Esophagus muscularis mucosa (tissue), 4 donors: ENCODE measurements at regions of chr5 and their contacts with region 1.

Region 1: GRCh38 chr5:108748401-108749127 is 867 bp downstream of the FER start:
- DNase-seq: peak; percentile 100
- H3K4me3 ChIP-seq: peak overlapping the region; percentile 87 to 97 (median 95)
- H3K27ac ChIP-seq: peak overlapping the region; percentile 98 to 99 (median 98)
- H3K4me1 ChIP-seq: peaks cover 8 to 47% (median 27%) of the 10 kb centered on the region in 4 donors
- H3K27me3 ChIP-seq: no peaks in the 10 kb centered on the region
- CTCF ChIP-seq: peak in 2 of 3 experiments; percentile 11 to 20
- EP300 ChIP-seq: no peak
- POLR2A ChIP-seq: peak; percentile 98

Region 2: DNA sequence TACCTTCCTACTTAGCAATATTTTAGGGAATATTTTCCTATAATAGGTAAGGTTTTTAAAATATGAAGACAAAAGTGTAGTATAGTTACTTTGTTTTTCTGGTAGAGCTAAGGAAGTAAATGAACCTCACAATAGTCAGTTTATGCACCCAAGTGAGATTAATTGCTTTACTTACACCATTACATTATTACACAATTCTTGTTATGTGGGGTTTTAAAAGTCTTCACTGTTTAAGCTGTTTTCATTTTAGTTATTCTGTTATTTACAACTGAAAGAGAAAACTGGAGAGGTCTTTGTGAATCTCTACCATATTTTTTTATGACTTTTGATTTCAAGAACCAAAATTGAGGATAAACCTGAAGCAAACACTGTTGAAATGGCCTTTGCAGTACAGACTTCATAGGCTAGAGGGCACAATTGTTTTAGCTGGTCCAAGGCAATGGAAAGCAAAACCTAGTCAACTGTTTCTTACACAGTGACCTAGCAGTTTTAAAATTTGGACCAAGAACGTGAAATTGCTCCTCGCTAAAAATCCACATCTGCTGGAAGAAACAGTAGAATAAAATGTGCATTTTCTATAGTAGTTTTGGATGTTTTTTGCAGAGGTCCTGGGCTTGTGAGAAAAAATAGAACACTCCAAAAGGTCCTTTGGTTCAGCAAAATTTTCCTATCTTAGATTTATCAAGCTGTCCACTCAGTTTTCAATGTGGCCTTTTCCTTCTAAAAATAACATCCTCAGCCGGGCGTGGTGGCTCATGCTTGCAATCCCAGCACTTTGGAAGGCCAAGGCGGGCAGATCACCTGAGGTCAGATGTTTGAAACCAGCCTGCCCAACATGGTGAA is 67.3 kb before region 1 on chr5:
- intact Hi-C with region 1: loop called (anchors 5 kb)
- DNase-seq: no peak
- H3K4me3 ChIP-seq: peak overlapping the region in 2 of 4 donors; percentile 36 to 42
- H3K27ac ChIP-seq: peak overlapping the region; percentile 37 to 74 (median 65)
- H3K4me1 ChIP-seq: peaks cover 0 to 7% (median 4%) of the 10 kb centered on the region in 4 donors
- H3K27me3 ChIP-seq: no peaks in the 10 kb centered on the region
- CTCF ChIP-seq: peak; percentile 78 to 92 (median 87)
- EP300 ChIP-seq: no peak
- POLR2A ChIP-seq: no peak

Region 3: DNA sequence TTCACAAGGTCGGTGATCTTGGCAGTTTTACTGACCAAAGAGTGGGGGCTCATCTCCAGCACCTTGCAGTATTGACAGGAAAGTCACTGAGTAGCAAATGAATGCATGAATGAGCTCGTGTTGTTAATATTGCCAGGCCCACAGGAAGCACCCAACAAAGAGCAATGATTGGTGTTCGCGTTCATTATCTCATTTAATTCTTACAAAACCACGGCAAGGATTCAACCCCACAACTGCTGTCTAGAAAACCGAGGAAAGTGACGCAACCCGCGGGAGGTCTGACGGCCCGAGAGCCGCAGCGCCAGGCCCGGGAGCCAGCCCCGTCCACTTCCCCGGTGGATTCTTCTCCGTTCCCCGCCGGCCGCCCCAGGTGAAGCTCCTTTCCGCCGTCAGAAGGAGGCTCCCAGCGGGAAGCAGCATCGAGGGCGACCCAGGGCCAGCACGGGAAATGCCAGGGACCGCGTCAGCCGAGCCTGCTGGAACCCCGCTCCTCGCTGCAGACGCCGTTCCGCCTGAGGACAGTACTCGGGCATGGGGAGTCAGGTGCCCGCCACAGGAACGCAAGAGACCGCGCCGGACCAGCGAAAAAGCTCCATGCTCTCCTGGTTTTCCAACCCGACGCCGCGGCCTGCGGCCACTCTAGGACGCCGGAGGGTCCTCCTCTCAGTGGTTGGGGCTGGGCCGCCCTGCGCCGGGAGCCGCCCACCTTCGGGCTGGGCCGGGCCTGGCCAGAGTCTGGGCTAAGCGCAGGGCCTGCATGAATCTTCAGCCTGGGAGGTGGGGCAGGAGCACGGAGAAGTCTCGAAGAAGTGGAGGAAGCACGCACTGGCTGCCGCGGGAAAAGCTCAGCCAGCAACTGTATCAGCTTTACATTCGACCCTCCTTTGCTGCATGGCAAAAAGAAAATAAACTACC is 20.7 kb before region 1 on chr5:
- intact Hi-C with region 1: loop called (anchors 2 kb)
- DNase-seq: peak; percentile 94
- H3K4me3 ChIP-seq: peak overlapping the region; percentile 69 to 89 (median 82)
- H3K27ac ChIP-seq: peak overlapping the region; percentile 87 to 96 (median 90)
- H3K4me1 ChIP-seq: peaks cover 12 to 22% (median 19%) of the 10 kb centered on the region in 4 donors
- H3K27me3 ChIP-seq: no peaks in the 10 kb centered on the region
- CTCF ChIP-seq: peak in 2 of 3 experiments; percentile 2 to 10
- EP300 ChIP-seq: no peak
- POLR2A ChIP-seq: no peak

Region 4: DNA sequence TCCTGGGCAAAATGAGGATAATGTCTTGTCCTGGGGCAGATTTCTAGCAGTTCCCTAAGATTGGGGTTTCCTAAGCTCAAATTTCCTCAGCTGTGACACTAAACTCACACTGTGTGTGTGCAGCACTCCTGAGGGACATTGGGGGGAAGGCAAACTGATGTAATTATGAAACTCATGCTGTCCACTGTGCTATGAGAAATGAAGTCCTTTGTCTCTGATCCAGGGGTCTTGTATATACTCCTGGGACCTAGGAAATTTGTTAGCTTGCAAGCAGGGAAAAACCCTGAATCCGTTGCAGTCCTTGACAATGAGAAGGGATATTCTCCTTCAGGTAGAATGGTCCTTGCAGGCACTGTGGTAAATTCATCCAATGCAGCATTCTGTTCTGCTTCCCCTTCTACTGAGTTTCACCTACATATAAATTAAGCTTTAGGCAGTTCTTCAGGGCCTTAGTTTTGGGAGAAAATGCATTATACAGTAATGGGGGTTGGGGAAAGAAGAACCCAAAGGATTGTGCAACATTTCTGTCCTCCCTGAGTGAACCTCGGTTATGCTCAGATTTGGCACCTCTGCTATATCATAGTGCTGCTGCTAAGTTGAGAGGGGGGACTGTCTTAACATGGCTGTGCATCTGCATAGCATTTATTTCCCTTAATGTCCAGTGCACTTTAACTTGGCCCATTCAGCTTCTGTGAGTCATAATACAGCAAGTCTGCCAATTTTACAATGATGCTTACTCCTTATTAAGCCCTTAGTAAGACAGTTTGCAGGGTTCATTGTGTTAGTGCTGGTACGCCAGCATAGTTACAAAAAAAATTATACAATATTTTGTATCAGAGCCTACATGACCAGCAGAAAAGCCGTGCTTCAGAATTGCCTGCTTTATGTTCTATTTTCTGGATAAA is 581.0 kb after region 1 on chr5:
- intact Hi-C with region 1: loop called (anchors 10 kb)
- DNase-seq: no peak
- H3K4me3 ChIP-seq: no peak overlapping the region
- H3K27ac ChIP-seq: peak overlapping the region; percentile 76 to 83 (median 80)
- H3K4me1 ChIP-seq: peaks cover 5 to 77% (median 49%) of the 10 kb centered on the region in 4 donors
- H3K27me3 ChIP-seq: no peaks in the 10 kb centered on the region
- CTCF ChIP-seq: no peak
- EP300 ChIP-seq: no peak
- POLR2A ChIP-seq: no peak